Sciatic nerve (tissue), 2 donors: ENCODE measurements at regions of chr12 and their contacts with region 1.

Region 1: GRCh38 chr12:6532927-6533652 is 1.2 kb upstream of the GAPDH start:
- DNase-seq: peak; percentile 83
- ATAC-seq: peak; percentile 72

Region 2: GRCh38 chr12:6312529-6313325 is 220.4 kb before region 1 on chr12:
- intact Hi-C with region 1: no loop called
- DNase-seq: no peak
- ATAC-seq: peak; percentile 41

Region 3: DNA sequence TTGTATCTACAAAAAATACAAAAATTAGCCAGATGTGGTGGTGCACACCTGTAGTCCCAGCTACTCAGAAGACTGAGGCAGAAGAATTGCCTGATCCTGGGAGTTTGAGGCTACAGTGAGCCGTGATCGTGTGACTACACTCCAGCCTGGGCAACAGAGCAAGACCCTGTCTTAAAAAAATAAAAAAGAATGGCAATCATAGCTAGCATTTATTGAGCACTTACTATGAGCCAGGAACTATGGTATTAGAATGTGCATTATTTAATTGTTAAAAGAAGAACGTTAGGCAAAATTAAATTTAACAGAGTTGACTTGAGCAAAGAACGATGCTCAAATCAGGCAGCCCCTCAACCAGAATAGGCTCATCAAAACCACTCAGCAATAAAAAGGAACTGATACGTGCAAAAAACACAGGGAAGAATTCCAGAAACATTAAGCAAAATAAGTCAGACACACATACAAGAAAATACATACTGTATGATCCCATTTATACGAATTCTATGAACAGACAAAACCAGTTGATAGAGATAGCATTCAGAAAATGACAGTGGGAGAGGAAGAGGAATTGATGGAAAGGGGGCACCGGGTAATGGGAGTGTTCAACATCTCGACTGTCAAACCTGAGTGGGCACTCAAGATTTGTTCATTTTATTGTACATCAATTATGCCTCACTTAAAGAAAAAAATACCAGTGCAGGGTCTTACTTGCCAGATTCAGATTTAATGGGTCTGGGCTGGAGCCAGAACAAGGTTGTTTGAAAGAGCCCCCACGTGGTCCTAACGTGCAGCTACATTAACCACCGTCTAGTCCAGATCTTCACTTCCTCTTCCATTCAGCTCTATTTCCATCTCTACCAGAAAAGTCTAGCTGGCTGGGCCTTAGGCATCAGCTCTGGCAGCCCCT is 165.8 kb before region 1 on chr12:
- intact Hi-C with region 1: no loop called
- DNase-seq: no peak
- ATAC-seq: no peak

Region 4: DNA sequence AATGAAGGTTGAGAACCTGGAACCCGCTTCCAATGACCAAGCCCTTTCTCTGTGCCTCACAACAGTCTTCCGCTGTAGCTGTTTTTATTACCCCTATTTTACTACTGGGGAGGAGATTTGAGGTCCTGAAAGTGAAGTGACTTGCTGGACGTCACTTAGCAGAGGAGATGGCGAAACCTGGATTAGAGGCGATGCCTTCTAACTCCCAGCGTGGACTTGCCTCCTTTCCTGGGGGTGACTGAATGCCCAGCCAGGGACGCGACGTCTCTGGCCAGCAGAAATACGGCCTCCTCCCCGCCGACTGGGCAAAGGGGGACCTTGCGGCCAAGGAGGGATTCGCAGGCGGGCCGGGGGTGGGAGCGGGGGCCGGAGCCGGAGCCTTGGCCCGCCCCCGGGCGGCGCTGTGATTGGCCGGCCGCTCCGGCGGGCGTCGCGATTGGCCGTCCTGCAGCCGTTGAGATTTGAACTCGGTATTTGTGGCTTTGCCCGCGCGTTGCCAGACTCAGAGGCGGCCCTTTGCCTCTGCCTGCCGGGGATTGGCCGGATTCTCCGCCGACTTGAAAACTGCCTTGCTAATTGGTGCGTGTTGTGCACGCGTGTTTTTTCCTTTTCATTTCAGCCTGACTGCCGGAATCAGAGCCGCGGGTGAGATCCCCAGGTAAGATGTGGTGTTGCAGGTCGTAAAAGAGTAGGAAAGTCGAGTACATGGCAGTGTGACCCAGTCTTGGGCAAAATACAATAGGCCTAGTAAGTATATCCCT is 39.4 kb before region 1 on chr12 and contains the start of gene NCAPD2:
- intact Hi-C with region 1: loop called (anchors 1 kb)
- DNase-seq: peak; percentile 95
- ATAC-seq: peak; percentile 96
- total RNA-seq, gene NCAPD2: 21.3 TPM